ENCODE measurements at regions of chr5 and their contacts with region 1.

Region 1: DNA sequence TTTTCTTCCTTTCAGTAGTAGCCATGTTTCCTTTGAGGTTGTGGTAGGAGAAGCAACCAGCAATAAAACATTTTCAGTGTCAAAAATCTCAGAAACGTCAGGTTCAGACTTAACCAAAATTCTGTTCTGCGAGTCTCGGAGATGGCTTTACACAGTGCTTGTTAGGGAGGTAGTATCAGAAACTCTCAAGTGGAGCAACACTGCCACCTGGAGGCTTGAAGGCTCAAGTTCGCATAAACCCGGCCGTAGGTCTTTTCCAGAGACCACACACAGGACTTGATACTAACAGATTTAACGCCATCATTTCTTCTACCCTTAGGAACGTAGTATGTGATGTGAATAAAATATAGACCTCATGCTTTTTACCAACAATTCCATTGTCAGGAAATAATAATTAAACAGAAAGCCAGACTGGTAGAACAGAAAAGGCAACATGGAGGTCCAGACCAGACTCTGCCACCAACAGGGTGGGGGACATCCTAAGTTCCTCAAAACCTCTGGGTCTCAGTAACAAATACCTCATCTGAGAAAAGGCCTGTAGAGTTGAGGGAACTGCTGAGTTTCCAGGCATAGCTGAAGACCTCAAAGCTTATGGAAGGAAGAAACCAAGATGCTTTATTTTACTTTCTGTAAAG is 8.5 kb downstream of the PTGER4 start:
- DNase-seq: peak; percentile 92
- ATAC-seq: peak; percentile 71
- H3K4me3 Mint-ChIP-seq: peak overlapping the region; percentile 93
- H3K27ac Mint-ChIP-seq: peak overlapping the region; percentile 90
- H3K4me1 Mint-ChIP-seq: peaks cover 69% of the 10 kb centered on the region
- H3K27me3 Mint-ChIP-seq: no peaks in the 10 kb centered on the region

Region 2: DNA sequence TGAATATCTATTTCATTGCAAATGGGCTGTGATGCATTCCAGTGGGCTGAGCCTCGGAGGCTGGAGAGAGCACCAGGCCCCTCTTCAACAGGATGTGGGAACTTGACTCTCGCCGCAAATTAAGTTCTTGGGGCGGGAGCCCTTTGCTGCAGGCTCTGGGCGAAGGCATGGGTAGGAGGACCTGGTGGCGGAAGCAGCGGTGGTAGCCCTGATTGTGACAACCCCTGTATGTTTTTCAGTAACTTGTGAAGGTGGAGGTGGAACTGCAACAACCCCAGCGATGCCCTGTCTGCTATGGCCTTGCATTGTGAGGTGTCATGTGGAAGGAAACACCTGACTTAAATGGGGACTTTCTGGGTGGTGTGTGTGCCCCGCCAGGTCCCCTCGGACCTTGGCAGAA is 1478.3 kb before region 1 on chr5:
- CTCF ChIA-PET with region 1: no interaction called
- POLR2A ChIA-PET with region 1: no interaction called
- intact Hi-C with region 1: loop called in 1 of 2 experiments (anchors 10 kb)
- DNase-seq: peak; percentile 87
- ATAC-seq: peak; percentile 59
- H3K4me3 Mint-ChIP-seq: peak overlapping the region; percentile 67
- H3K27ac Mint-ChIP-seq: peak overlapping the region; percentile 95
- H3K4me1 Mint-ChIP-seq: peaks cover 84% of the 10 kb centered on the region
- H3K27me3 Mint-ChIP-seq: no peaks in the 10 kb centered on the region

Region 3: DNA sequence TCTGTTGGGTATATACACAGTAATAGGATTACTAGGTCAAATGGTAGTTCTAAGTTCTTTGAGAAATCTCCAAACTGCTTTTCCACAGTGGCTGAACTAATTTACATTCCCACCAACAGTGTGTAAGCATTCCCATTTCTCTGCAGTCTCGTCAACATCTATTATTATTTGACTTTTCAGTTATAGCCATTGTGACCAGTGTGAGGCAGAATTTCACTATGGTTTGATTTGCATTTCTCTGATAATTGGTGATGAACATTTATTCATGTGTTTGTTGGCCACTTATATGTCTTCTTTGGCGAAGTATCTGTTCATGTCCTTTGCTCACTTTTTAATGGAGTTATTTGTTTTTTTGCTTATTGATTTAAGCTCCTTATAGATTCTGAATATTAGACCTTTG is 667.2 kb before region 1 on chr5:
- CTCF ChIA-PET with region 1: no interaction called
- POLR2A ChIA-PET with region 1: no interaction called
- intact Hi-C with region 1: loop called in 1 of 2 experiments (anchors 5 kb)
- DNase-seq: no peak
- ATAC-seq: no peak
- H3K4me3 Mint-ChIP-seq: no peak overlapping the region
- H3K27ac Mint-ChIP-seq: no peak overlapping the region
- H3K4me1 Mint-ChIP-seq: no peaks in the 10 kb centered on the region
- H3K27me3 Mint-ChIP-seq: peaks cover 5% of the 10 kb centered on the region

Region 4: DNA sequence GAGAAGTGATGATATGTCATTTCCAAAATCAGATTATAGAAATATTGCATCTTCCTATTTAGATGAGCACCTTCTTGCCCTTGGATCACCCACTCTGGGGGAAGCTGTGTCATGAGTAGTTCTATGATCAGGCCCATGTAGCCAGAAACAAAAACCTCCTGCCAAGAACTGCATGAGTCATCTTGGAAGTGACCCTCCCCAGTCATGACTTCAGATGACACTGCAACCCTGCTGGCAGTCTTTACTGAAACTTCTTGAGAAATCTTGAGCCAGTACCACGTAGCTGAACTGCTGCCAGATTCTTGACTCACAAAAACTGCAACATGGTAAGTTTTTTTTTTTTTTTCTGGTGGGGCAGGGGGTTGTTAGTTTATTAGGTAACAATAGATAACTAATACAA is 448.1 kb before region 1 on chr5:
- CTCF ChIA-PET with region 1: no interaction called
- POLR2A ChIA-PET with region 1: interaction called, 6 read pairs
- intact Hi-C with region 1: loop called in 1 of 2 experiments (anchors 1 kb)
- DNase-seq: peak; percentile 74
- ATAC-seq: peak; percentile 91
- H3K4me3 Mint-ChIP-seq: no peak overlapping the region
- H3K27ac Mint-ChIP-seq: no peak overlapping the region
- H3K4me1 Mint-ChIP-seq: peaks cover 28% of the 10 kb centered on the region
- H3K27me3 Mint-ChIP-seq: no peaks in the 10 kb centered on the region

Region 5: DNA sequence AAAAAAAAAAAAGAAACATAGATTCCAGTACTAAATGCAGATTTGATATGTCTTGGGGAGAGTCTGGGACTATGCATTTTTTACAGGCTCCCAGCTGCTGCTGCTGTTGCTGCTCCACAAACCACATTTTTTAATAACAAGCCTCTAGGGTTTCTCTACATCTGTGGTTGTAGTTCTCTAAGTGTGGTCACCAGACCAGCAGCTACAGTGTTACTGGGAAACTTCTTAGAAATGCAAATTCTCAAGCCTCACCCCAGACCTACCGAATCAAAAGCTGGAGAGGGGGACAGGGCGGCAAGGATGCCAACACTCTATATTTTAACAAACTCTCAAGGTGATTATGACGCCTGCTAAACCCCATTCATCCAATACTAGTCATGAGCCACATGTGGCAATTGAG is 302.0 kb before region 1 on chr5:
- CTCF ChIA-PET with region 1: interaction called, 4 read pairs
- POLR2A ChIA-PET with region 1: no interaction called
- intact Hi-C with region 1: loop called (anchors 1 kb)
- DNase-seq: peak; percentile 39
- ATAC-seq: peak; percentile 11
- H3K4me3 Mint-ChIP-seq: no peak overlapping the region
- H3K27ac Mint-ChIP-seq: peak overlapping the region; percentile 92
- H3K4me1 Mint-ChIP-seq: peaks cover 86% of the 10 kb centered on the region
- H3K27me3 Mint-ChIP-seq: no peaks in the 10 kb centered on the region

Region 6: GRCh38 chr5:40486437-40487275 is 201.6 kb before region 1 on chr5:
- CTCF ChIA-PET with region 1: interaction called, 3 read pairs
- POLR2A ChIA-PET with region 1: interaction called, 5 read pairs
- intact Hi-C with region 1: loop called (anchors 1 kb)
- DNase-seq: peak; percentile 82
- ATAC-seq: peak; percentile 75
- H3K4me3 Mint-ChIP-seq: peak overlapping the region; percentile 12
- H3K27ac Mint-ChIP-seq: peak overlapping the region; percentile 91
- H3K4me1 Mint-ChIP-seq: peaks cover 82% of the 10 kb centered on the region
- H3K27me3 Mint-ChIP-seq: no peaks in the 10 kb centered on the region

Region 7: GRCh38 chr5:40559306-40559705 is 128.9 kb before region 1 on chr5:
- CTCF ChIA-PET with region 1: no interaction called
- POLR2A ChIA-PET with region 1: no interaction called
- intact Hi-C with region 1: no loop called
- DNase-seq: no peak
- ATAC-seq: no peak
- H3K4me3 Mint-ChIP-seq: no peak overlapping the region
- H3K27ac Mint-ChIP-seq: no peak overlapping the region
- H3K4me1 Mint-ChIP-seq: peaks cover 25% of the 10 kb centered on the region
- H3K27me3 Mint-ChIP-seq: no peaks in the 10 kb centered on the region

Region 8: GRCh38 chr5:40736103-40736875 is 48.0 kb after region 1 on chr5:
- CTCF ChIA-PET with region 1: interaction called, 4 read pairs
- POLR2A ChIA-PET with region 1: no interaction called
- intact Hi-C with region 1: loop called (anchors 1 to 2 kb)
- DNase-seq: no peak
- ATAC-seq: peak; percentile 72
- H3K4me3 Mint-ChIP-seq: no peak overlapping the region
- H3K27ac Mint-ChIP-seq: peak overlapping the region; percentile 69
- H3K4me1 Mint-ChIP-seq: peaks cover 22% of the 10 kb centered on the region
- H3K27me3 Mint-ChIP-seq: no peaks in the 10 kb centered on the region

Measured in activated CD4-positive, alpha-beta T cell treated with anti-CD3 and anti-CD28 coated beads for 36 hours (primary cell).